K562 (cell line): ENCODE measurements at regions of chr1 and their contacts with region 1.

Region 1: GRCh38 chr1:223845810-223846682 is at the start of gene TP53BP2:
- DNase-seq: peak; percentile 94 to 99 (median 97)
- ATAC-seq: peak; percentile 85
- H3K4me3 ChIP-seq: peak within 1 kb of the TSS; percentile 81
- H3K27ac ChIP-seq: peak within 1 kb of the TSS; percentile 93
- H3K4me1 ChIP-seq: peaks cover 23 to 34% of the 10 kb centered on the region in 2 experiments
- H3K27me3 ChIP-seq: no peaks in the 10 kb centered on the region
- CTCF ChIP-seq: peak; percentile 74 to 87 (median 81)
- EP300 ChIP-seq: no peak
- POLR2A ChIP-seq: peak; percentile 89
- RAD21 ChIP-seq: peak; percentile 69 to 70
- polyA plus RNA-seq, gene TP53BP2: 17.0 to 20.7 TPM

Region 2: DNA sequence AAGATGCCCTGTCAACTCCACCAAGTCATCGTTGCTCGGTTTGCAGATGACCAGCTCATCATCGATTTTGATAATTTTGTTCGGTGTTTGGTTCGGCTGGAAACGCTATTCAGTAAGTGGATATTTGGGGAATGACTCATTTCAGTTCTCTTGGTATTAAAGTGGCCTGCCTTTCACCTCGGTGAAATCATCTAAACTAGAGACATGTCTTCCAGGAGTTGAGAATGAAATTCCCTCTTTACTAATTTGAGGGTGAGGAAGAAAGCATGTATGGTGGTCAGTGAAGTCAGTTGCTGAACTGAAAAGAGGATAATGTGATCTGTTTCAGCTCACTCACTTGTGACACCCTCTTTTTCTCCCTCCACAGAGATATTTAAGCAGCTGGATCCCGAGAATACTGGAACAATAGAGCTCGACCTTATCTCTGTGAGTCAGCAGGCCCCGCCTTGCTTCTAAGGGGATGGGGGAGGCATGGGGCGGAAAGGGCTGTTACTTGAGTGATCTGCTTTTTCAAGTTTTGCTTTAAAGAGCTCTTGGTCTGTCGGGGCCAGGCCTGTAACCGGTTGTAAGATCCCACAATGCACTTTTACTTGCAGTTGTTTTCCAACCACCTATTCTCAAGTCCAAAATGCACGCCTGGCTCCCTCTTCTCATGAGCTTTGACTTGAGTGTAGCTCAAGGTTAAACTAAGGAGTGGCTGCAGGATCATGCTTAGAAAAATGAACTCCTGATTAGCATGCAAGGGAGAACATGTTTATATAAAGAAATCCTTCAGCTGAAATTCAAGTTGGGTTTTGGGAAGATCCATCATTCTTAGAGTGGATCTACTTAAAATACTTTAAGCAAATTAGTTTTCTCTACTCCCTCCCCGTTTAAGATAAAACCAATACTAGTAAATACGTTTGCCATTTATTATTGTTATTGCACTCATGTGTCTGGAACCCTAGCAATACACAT is 74.0 kb before region 1 on chr1:
- CTCF ChIA-PET with region 1: no interaction called
- POLR2A ChIA-PET with region 1: interaction called, 13 read pairs
- in situ Hi-C with region 1: no loop called
- intact Hi-C with region 1: no loop called
- DNase-seq: peak; percentile 92 to 98 (median 94)
- ATAC-seq: peak; percentile 91
- H3K4me3 ChIP-seq: no peak overlapping the region
- H3K27ac ChIP-seq: peak overlapping the region; percentile 93
- H3K4me1 ChIP-seq: peaks cover 27 to 62% of the 10 kb centered on the region in 2 experiments
- H3K27me3 ChIP-seq: no peaks in the 10 kb centered on the region
- CTCF ChIP-seq: no peak
- EP300 ChIP-seq: peak; percentile 91
- POLR2A ChIP-seq: peak; percentile 76
- RAD21 ChIP-seq: no peak; a peak in 3 of 4 replicates

Region 3: DNA sequence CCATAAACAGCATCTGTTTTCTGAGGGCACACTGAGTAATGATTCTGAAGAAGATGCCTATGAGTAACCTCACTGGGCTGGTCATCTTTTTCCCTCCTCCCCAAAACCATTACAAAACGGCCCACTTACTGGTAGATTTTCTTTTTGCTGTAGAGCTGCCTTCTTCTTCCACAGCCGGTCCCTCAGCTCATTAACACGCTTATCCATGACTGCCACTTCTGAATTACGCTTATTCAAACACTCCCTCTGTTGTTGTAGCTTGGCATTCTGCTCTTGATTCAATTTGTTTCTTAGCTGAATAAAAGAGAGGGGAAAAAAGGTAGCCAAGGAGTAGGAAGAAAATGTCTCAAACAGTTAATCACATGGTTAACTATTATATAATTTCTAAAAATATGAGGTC is 43.4 kb before region 1 on chr1:
- CTCF ChIA-PET with region 1: no interaction called
- POLR2A ChIA-PET with region 1: interaction called, 11 read pairs
- in situ Hi-C with region 1: no loop called
- intact Hi-C with region 1: no loop called
- DNase-seq: no peak
- ATAC-seq: no peak
- H3K4me3 ChIP-seq: no peak overlapping the region
- H3K27ac ChIP-seq: no peak overlapping the region
- H3K4me1 ChIP-seq: no peaks in the 10 kb centered on the region
- H3K27me3 ChIP-seq: no peaks in the 10 kb centered on the region
- CTCF ChIP-seq: no peak
- EP300 ChIP-seq: no peak
- POLR2A ChIP-seq: no peak
- RAD21 ChIP-seq: no peak

Region 4: DNA sequence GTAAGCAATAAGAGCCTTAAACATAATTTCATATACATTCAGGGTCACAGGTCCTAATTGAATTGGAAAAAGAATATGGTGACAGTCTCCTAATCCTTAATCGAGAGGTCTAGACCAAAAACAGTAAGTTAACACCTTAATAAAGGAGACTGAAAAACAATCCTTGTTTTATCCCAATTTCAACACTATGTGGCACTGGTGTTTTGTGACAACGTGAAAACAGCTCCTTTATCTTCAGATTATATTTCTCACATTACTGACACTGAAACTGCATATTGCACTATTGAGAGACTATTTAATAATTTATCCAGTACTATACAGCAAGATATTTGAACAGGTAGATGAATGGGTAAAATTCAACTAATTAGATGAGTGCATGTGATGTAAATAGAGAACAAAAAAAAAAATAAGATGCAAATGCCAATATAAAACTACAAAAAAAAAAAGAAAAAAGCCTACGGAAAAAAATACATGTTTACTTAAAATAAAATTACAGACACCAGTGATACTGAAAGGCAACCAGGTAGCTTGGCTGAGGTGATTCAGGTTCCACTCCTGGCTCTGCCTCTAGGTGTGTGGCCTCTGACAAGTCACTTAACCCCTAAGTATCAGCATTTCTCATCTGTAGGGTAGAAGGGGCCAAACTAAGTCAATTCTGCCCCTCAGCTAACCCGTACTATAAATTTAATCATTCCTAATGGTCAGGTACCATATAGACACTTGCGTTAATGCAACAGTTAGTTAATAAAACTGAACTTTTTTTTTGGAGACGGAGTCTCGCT is 34.2 kb before region 1 on chr1:
- CTCF ChIA-PET with region 1: no interaction called
- POLR2A ChIA-PET with region 1: no interaction called
- in situ Hi-C with region 1: no loop called
- intact Hi-C with region 1: loop called (anchors 1 kb)
- DNase-seq: peak in 1 of 4 experiments; percentile 58
- ATAC-seq: peak; percentile 81
- H3K4me3 ChIP-seq: no peak overlapping the region
- H3K27ac ChIP-seq: no peak overlapping the region
- H3K4me1 ChIP-seq: no peaks in the 10 kb centered on the region; a peak in 2 of 5 replicates
- H3K27me3 ChIP-seq: no peaks in the 10 kb centered on the region
- CTCF ChIP-seq: peak; percentile 45 to 87 (median 59); a peak in 4 of 6 replicates
- EP300 ChIP-seq: no peak
- POLR2A ChIP-seq: no peak
- RAD21 ChIP-seq: peak; percentile 96 to 98

Region 5: DNA sequence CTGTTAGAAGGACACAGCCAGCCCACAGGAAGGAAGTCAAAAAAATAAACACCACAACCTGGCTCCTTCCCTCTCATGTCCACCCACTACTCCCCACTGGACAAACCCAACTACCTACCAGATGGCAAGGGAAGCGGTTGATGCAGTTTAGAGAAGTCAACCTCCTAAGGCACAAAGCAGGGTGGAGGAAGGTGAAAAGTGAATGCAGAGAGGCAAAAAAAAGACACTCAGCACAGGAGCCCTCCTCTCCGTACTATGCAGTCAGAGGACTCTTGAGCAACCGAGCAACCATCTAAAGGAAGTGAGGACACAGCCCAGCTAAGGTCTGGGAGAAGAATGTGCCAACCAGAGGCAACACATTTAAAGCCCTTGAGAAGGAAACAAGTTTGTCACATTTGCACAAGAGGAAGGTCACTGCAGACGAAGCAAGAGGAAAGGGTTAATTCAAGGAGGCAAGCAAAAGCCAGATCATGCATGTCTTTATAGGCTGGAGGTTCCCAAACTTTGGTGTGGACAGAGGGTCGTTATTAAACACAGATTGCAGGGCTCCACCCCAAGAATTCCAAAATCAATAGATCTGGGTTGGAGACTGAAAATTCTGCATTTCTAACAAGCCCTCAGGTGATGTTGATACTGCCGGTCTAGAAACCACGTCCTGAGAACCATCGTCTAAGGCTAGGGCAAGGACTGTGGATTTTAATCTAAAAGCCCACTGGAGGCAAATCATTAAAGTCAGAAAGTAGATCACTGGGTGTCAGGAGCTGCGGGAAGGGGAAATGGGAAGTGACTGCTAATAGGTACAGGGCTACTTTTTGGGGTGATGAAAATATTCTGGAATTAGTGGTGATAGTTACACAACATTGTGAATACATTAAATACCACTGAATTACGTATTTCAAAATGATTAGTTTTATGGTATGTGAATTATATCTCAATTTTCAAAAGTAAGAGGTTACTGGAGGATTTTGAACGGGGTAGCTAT is 20.0 kb before region 1 on chr1:
- CTCF ChIA-PET with region 1: no interaction called
- POLR2A ChIA-PET with region 1: interaction called, 14 read pairs
- in situ Hi-C with region 1: no loop called
- intact Hi-C with region 1: no loop called
- DNase-seq: no peak
- ATAC-seq: peak; percentile 3; the same call in 1 of the 3 replicates
- H3K4me3 ChIP-seq: no peak overlapping the region
- H3K27ac ChIP-seq: no peak overlapping the region
- H3K4me1 ChIP-seq: peaks cover 6 to 27% of the 10 kb centered on the region in 2 experiments; a peak in 3 of 5 replicates
- H3K27me3 ChIP-seq: no peaks in the 10 kb centered on the region
- CTCF ChIP-seq: no peak
- EP300 ChIP-seq: no peak
- POLR2A ChIP-seq: no peak
- RAD21 ChIP-seq: no peak

Region 6: DNA sequence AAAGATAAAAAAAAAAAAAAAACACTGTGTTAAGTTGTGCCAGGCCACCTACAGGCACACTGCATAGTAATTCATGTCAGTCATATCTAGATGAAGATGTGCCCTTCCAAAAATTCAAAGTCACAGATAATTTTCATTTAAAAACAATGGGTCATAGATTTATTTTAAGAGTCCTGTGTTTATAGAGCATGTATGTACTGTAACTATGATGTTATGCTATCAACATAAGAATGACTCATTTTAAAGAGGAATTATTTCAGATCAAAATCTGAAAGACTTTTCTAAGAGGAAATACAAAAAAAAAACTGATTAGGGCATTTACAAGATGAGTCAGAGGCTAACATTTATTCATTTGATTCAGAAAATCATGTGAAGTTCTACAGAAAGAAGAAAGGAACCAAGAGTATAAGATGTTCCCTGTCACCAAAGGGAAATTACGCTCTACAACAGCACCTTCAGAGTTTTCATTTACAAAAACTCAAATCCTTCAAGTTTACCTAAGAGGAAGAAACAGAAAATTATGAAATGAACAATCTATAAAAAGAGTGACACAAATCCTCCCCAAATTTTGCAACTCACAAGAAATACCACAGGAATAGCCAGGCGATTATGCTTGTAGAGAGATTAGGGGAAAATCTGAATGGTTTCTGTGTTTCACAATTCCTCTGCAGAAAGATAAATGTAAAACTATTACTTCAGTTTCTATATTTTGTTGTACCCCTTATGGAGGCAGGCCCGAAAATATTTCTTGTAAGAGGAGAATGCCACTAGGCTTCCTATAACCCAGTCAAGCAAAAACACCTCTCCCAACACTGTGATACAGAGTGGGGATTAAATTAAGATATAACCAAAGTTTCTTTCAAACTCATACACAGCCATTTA is 14.1 kb before region 1 on chr1:
- CTCF ChIA-PET with region 1: no interaction called
- POLR2A ChIA-PET with region 1: interaction called, 22 read pairs
- in situ Hi-C with region 1: no loop called
- intact Hi-C with region 1: no loop called
- DNase-seq: no peak
- ATAC-seq: no peak
- H3K4me3 ChIP-seq: no peak overlapping the region
- H3K27ac ChIP-seq: peak overlapping the region; percentile 15; the same call in 1 of the 3 replicates
- H3K4me1 ChIP-seq: peaks cover 14 to 54% of the 10 kb centered on the region in 2 experiments
- H3K27me3 ChIP-seq: no peaks in the 10 kb centered on the region
- CTCF ChIP-seq: no peak
- EP300 ChIP-seq: no peak
- POLR2A ChIP-seq: no peak
- RAD21 ChIP-seq: no peak

Region 7: GRCh38 chr1:223856386-223856785 is 10.3 kb after region 1 on chr1:
- CTCF ChIA-PET with region 1: no interaction called
- POLR2A ChIA-PET with region 1: interaction called, 11 read pairs
- in situ Hi-C with region 1: no loop called
- intact Hi-C with region 1: no loop called
- DNase-seq: no peak
- ATAC-seq: no peak
- H3K4me3 ChIP-seq: no peak overlapping the region
- H3K27ac ChIP-seq: no peak overlapping the region
- H3K4me1 ChIP-seq: no peaks in the 10 kb centered on the region; a peak in 1 of 5 replicates
- H3K27me3 ChIP-seq: no peaks in the 10 kb centered on the region
- CTCF ChIP-seq: no peak
- EP300 ChIP-seq: no peak
- POLR2A ChIP-seq: no peak
- RAD21 ChIP-seq: no peak